Activated B cell treated with CpG ODN at 0.5 μM for 24 hours (primary cell): ENCODE measurements at regions of chr17 and their contacts with region 1.

Region 1: DNA sequence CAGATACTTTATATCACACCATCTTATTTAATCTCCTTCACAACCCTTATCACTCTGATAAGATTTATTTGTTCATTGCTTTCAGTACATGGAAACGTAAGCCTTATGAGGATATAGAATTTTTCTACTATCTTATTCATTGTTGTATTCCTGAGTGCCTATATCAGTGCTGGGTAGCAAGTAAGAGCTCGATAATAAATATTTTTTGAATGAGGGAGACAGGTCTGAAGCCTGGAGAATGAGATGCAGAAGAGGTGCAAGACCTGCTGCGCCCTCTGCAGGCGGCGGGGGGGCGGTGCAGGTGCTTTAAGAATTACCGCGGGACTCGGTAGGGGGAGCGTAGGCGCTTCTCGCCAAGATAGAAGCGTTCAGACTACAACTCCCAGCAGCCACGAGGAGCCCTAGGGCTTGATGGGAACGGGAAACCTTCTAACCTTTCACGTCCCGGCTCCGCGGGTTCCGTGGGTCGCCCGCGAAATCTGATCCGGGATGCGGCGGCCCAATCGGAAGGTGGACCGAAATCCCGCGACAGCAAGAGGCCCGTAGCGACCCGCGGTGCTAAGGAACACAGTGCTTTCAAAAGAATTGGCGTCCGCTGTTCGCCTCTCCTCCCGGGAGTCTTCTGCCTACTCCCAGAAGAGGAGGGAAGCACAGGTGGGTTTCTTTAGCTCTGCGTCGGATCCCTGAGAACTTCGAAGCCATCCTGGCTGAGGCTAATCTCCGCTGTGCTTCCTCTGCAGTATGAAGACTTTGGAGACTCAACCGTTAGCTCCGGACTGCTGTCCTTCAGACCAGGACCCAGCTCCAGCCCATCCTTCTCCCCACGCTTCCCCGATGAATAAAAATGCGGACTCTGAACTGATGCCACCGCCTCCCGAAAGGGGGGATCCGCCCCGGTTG is at the start of gene WRAP53:
- DNase-seq: peak; percentile 91
- ATAC-seq: peak; percentile 77
- H3K4me3 Mint-ChIP-seq: peak within 1 kb of the TSS; percentile 97
- H3K27ac Mint-ChIP-seq: peak within 1 kb of the TSS; percentile 99
- H3K4me1 Mint-ChIP-seq: peaks cover 49% of the 10 kb centered on the region
- H3K27me3 Mint-ChIP-seq: no peaks in the 10 kb centered on the region
- CTCF ChIP-seq: peak; percentile 94
- total RNA-seq, gene WRAP53: 17.1 and 17.6 TPM in 2 replicates

Region 2: GRCh38 chr17:7234083-7234951 is 453.8 kb before region 1 on chr17 and contains the start of gene DVL2:
- CTCF ChIA-PET with region 1: no interaction called
- POLR2A ChIA-PET with region 1: interaction called, 12 read pairs
- intact Hi-C with region 1: loop called (anchors 5 kb)
- DNase-seq: peak; percentile 93
- ATAC-seq: peak; percentile 47
- H3K4me3 Mint-ChIP-seq: peak within 1 kb of the TSS; percentile 86
- H3K27ac Mint-ChIP-seq: peak within 1 kb of the TSS; percentile 88
- H3K4me1 Mint-ChIP-seq: peaks cover 51% of the 10 kb centered on the region
- H3K27me3 Mint-ChIP-seq: no peaks in the 10 kb centered on the region
- CTCF ChIP-seq: no peak
- total RNA-seq, gene DVL2: 56.1 and 64.6 TPM in 2 replicates

Region 3: DNA sequence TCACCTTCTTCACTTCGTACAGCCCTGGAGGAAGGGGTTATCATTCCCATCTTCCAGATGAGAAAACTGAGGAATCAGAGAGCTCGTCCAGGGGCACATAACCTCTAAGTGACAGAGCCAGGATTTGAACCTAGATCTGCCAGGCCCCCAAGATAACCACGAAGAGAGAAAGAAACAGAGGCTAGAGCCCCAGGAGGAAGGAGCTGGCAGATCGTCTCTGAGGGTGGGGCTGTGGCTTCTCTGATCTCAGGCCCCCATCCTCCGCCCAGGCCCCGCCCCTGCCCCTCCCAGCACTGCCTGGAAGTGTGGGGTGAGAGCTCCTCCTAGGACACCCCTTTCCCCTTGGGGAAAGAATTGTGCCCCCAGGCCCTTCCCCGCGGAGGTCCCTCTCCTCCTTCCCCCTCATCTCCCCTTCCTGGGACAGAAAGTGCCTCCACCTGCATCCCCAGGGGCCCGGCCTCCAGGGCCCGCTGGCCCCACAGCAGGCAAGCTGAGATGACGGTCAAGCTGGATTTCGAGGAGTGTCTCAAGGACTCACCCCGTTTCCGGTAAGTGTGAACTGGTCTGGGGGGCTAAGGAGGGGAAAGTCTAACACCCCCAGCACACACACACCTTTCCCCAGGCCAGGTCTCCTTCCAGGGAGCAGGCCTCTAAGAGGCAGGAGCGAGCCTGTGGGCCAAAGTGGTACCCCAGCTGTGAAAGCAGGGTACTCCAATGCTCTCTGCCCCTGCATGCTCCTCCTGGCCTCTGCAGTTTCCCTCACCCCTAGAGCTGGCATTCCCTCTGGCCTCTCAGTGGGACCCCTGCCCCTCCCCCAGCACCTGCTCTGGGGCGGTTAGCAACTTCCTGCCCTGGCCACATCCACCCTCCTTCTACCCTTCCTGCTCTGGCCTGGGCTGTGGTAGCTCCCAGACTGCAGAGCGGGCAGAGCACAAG is 351.6 kb before region 1 on chr17 and contains the start of gene ACAP1:
- CTCF ChIA-PET with region 1: no interaction called
- POLR2A ChIA-PET with region 1: interaction called, 20 read pairs
- intact Hi-C with region 1: no loop called
- DNase-seq: peak; percentile 67
- ATAC-seq: peak; percentile 96
- H3K4me3 Mint-ChIP-seq: peak within 1 kb of the TSS; percentile 85
- H3K27ac Mint-ChIP-seq: peak within 1 kb of the TSS; percentile 98
- H3K4me1 Mint-ChIP-seq: peaks cover 49% of the 10 kb centered on the region
- H3K27me3 Mint-ChIP-seq: no peaks in the 10 kb centered on the region
- CTCF ChIP-seq: no peak
- total RNA-seq, gene ACAP1: 298 and 328 TPM in 2 replicates

Region 4: DNA sequence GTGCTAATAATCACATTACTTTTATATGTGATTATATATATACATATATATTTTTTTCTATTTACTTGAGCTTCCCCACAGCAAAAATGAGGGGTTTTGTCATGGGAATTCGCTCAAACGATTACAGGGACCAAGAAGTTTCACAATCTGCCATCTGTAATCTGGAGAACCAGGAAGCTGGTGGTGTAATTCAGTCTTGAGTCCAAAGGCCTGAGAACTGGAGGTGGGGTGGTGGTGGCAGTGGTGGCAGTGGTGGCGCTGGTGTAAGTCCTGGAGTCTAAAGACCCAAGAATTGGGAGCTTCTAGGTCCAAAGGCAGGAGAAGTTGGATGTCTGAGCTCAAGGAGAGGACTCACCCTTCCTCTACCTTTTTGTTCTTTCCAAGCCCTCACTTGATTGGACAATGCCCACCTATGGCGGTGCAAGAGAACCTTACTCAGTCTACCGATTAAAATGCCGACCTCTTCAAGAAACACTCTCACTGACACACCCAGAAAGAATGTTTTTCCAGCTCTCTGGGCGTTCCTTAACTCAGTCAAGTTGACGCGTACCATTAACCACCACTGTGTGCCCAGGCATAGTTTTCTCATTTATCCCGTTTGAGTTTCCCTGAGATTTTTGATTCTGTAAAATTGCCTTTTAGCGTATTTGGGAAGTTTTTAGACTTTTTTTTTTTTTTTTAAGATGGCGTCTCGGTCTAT is 172.1 kb before region 1 on chr17:
- CTCF ChIA-PET with region 1: interaction called, 9 read pairs
- POLR2A ChIA-PET with region 1: no interaction called
- intact Hi-C with region 1: loop called (anchors 1 kb)
- DNase-seq: no peak
- ATAC-seq: no peak
- H3K4me3 Mint-ChIP-seq: no peak overlapping the region
- H3K27ac Mint-ChIP-seq: peak overlapping the region; percentile 35
- H3K4me1 Mint-ChIP-seq: no peaks in the 10 kb centered on the region
- H3K27me3 Mint-ChIP-seq: no peaks in the 10 kb centered on the region
- CTCF ChIP-seq: no peak

Region 5: DNA sequence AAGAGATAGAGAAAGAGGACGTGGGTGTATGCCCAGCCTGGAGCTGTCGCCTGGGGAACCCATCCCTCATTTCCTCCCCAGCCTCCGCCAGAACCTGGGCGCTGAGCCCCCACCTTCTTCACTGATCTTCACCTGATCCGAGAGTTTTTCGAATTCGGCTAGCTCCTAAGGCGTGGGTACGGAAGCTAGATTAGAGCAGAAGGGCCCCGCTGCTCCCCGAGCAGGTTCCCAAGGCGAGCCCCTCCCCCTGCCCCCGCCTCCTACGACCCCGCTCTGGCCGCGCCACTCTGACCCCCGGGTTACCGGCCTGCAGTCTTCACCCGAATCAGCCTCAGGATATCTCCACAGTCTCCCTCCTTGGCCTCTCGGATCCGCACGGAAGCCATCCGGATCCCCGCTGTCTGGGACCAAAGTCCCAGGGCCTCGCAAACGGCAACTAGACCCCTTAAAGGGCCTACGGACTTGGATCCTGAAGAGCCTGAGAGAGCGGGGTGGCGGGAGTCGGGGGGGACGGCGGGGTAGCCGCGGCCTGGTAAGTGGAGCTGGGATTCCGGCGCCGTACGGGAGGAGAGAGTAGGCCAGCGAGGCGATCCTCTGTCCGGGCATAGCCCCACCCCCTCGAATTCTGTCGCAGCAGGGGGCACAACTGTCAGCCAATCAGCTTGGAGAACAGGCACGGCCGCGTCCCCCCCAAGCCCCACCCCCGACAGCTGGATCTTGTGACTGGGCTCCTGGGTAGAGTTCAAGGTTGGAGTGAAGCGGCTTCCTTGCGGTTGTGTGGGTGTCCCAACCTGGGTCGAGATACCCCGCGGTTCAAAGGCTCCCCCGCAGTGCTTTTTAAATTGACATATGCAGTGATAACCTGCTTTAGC is 60.7 kb before region 1 on chr17 and contains the start of gene SAT2:
- CTCF ChIA-PET with region 1: interaction called, 40 read pairs
- POLR2A ChIA-PET with region 1: interaction called, 87 read pairs
- intact Hi-C with region 1: loop called (anchors 1 kb)
- DNase-seq: peak; percentile 68
- ATAC-seq: peak; percentile 99
- H3K4me3 Mint-ChIP-seq: peak within 1 kb of the TSS; percentile 93
- H3K27ac Mint-ChIP-seq: peak within 1 kb of the TSS; percentile 80
- H3K4me1 Mint-ChIP-seq: peaks cover 11% of the 10 kb centered on the region
- H3K27me3 Mint-ChIP-seq: no peaks in the 10 kb centered on the region
- CTCF ChIP-seq: no peak
- total RNA-seq, gene SAT2: 44.5 and 45.0 TPM in 2 replicates

Region 6: GRCh38 chr17:7856883-7857723 is 168.9 kb after region 1 on chr17 and contains the start of gene NAA38:
- CTCF ChIA-PET with region 1: interaction called, 3 read pairs
- POLR2A ChIA-PET with region 1: interaction called, 33 read pairs
- intact Hi-C with region 1: loop called (anchors 1 kb)
- DNase-seq: peak; percentile 88
- ATAC-seq: peak; percentile 83
- H3K4me3 Mint-ChIP-seq: no peak within 1 kb of the TSS
- H3K27ac Mint-ChIP-seq: no peak within 1 kb of the TSS
- H3K4me1 Mint-ChIP-seq: peaks cover 5% of the 10 kb centered on the region
- H3K27me3 Mint-ChIP-seq: no peaks in the 10 kb centered on the region
- CTCF ChIP-seq: no peak
- total RNA-seq, gene NAA38: 36.0 and 47.9 TPM in 2 replicates

Region 7: GRCh38 chr17:8189711-8190477 is 501.7 kb after region 1 on chr17 and contains the start of gene BORCS6:
- CTCF ChIA-PET with region 1: no interaction called
- POLR2A ChIA-PET with region 1: interaction called, 13 read pairs
- intact Hi-C with region 1: no loop called
- DNase-seq: peak; percentile 84
- ATAC-seq: peak; percentile 67
- H3K4me3 Mint-ChIP-seq: no peak within 1 kb of the TSS
- H3K27ac Mint-ChIP-seq: peak within 1 kb of the TSS; percentile 95
- H3K4me1 Mint-ChIP-seq: peaks cover 11% of the 10 kb centered on the region
- H3K27me3 Mint-ChIP-seq: no peaks in the 10 kb centered on the region
- CTCF ChIP-seq: no peak
- total RNA-seq, gene BORCS6: 12.3 and 12.8 TPM in 2 replicates